Tibial artery (tissue), 4 donors: ENCODE measurements at regions of chr22 and their contacts with region 1.

Region 1: GRCh38 chr22:42844756-42845155 is 12.3 kb downstream of the ARFGAP3 start:
- DNase-seq: no peak
- H3K4me3 ChIP-seq: no peak overlapping the region
- H3K27ac ChIP-seq: no peak overlapping the region
- H3K4me1 ChIP-seq: peaks cover 0 to 10% (median 5%) of the 10 kb centered on the region in 4 donors
- H3K27me3 ChIP-seq: no peaks in the 10 kb centered on the region
- CTCF ChIP-seq: no peak

Region 2: DNA sequence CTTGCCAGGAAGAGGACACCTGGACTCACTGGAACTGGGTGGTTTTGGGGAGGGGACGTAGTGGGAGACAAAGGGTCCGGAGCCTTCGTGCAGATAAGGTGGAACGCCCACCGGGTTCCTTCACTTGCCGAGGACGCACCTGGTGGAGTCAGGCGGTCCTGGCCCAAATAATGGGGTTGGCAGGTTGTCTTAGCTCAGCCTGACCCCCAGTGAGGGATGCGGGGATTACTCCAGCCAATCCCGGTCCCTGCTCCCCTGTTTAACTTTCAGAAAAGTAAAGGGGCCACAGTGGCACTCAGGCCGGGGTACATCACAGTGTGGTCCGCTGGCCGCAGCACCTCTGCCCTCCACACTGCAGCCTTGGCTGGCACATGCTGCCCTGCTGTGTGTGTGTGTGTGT is 142.1 kb before region 1 on chr22:
- intact Hi-C with region 1: no loop called
- DNase-seq: no peak
- H3K4me3 ChIP-seq: no peak overlapping the region
- H3K27ac ChIP-seq: no peak overlapping the region
- H3K4me1 ChIP-seq: peaks cover 4 to 80% (median 39%) of the 10 kb centered on the region in 4 donors
- H3K27me3 ChIP-seq: no peaks in the 10 kb centered on the region
- CTCF ChIP-seq: no peak

Region 3: DNA sequence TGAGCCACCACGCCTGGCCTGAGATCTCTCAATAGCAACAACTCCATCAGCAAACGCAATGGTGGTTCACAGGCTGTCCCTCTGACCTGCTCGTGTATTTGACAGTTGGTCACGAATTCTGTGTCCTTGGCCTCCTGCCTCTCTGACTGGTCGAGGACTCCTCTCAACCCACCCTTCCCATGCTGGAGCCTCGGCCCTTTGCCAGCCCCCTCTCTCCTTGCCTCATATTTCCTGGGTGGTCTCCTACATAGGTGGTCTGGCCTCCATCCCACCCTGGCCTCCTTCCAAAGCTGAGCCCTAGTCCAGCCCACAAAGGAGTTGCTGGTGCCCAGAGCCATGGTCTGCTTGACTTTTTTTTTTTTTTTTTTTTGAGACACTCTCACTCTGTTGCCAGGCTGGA is 112.7 kb before region 1 on chr22:
- intact Hi-C with region 1: loop called (anchors 10 kb)
- DNase-seq: no peak
- H3K4me3 ChIP-seq: no peak overlapping the region
- H3K27ac ChIP-seq: no peak overlapping the region
- H3K4me1 ChIP-seq: peaks cover 0 to 5% (median 0%) of the 10 kb centered on the region in 4 donors
- H3K27me3 ChIP-seq: no peaks in the 10 kb centered on the region
- CTCF ChIP-seq: no peak